ENCODE measurements at regions of chr6 and their contacts with region 1.

Region 1: GRCh38 chr6:90574610-90575009 is 12.3 kb downstream of the MAP3K7 start:
- DNase-seq: no peak
- H3K4me3 Mint-ChIP-seq: no peak overlapping the region
- H3K27ac Mint-ChIP-seq: no peak overlapping the region
- H3K4me1 Mint-ChIP-seq: peaks cover 10% of the 10 kb centered on the region
- H3K27me3 Mint-ChIP-seq: no peaks in the 10 kb centered on the region

Region 2: GRCh38 chr6:90444160-90444714 is 130.4 kb before region 1 on chr6:
- CTCF ChIA-PET with region 1: no interaction called
- intact Hi-C with region 1: no loop called
- DNase-seq: no peak
- H3K4me3 Mint-ChIP-seq: peak overlapping the region; percentile 62
- H3K27ac Mint-ChIP-seq: peak overlapping the region; percentile 95
- H3K4me1 Mint-ChIP-seq: peaks cover 56% of the 10 kb centered on the region
- H3K27me3 Mint-ChIP-seq: no peaks in the 10 kb centered on the region

Region 3: GRCh38 chr6:90559931-90560330 is 14.7 kb before region 1 on chr6:
- CTCF ChIA-PET with region 1: interaction called, 3 read pairs
- intact Hi-C with region 1: loop called (anchors 1 kb)
- DNase-seq: no peak
- H3K4me3 Mint-ChIP-seq: no peak overlapping the region
- H3K27ac Mint-ChIP-seq: no peak overlapping the region
- H3K4me1 Mint-ChIP-seq: peaks cover 29% of the 10 kb centered on the region
- H3K27me3 Mint-ChIP-seq: no peaks in the 10 kb centered on the region